Activated CD4-positive, alpha-beta memory T cell treated with anti-CD3 and anti-CD28 coated beads for 36 hours (primary cell): ENCODE measurements at regions of chr21 and their contacts with region 1.

Region 1: GRCh38 chr21:25561668-25562641 is 45.3 kb downstream of the MRPL39 start:
- DNase-seq: peak; percentile 89
- H3K4me3 Mint-ChIP-seq: peak overlapping the region; percentile 80
- H3K27ac Mint-ChIP-seq: peak overlapping the region; percentile 94
- H3K4me1 Mint-ChIP-seq: peaks cover 52% of the 10 kb centered on the region
- H3K27me3 Mint-ChIP-seq: no peaks in the 10 kb centered on the region

Region 2: DNA sequence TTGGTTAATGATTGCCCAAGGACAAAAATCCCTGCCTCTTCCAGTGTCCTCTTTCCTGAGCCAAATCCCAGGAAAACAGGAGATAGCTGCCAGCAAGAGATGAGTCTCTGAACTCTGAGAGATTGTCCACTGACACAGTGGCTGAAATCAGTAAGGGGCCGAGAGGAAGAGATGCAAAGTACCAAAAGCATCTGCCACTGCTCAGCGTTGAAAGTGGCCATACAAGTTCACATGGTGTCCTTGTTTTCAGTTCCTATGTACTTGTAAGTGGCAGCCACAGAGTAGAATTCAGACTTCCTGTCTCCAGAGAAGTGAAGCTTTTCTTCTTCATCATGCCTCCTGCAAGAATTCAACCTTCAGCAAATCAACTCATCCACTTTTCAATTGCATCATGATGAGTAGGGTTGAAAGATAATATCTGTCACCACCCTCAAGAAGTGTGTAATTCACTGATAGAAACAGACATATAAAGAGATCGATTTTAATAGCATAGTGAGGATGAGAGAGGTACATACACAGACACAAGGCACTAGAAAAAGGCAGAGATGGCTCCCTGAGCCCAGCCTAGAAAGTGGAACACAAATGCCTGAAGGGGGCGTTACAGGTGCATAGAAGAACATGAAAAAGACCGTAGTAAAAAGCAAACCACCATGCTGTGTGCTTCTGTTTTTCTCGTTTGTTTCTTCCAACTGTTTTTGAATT is 140.5 kb before region 1 on chr21:
- CTCF ChIA-PET with region 1: interaction called, 11 read pairs
- POLR2A ChIA-PET with region 1: interaction called, 67 read pairs
- intact Hi-C with region 1: loop called (anchors 1 kb)
- DNase-seq: peak; percentile 79
- H3K4me3 Mint-ChIP-seq: peak overlapping the region; percentile 67
- H3K27ac Mint-ChIP-seq: peak overlapping the region; percentile 89
- H3K4me1 Mint-ChIP-seq: peaks cover 62% of the 10 kb centered on the region
- H3K27me3 Mint-ChIP-seq: no peaks in the 10 kb centered on the region

Region 3: DNA sequence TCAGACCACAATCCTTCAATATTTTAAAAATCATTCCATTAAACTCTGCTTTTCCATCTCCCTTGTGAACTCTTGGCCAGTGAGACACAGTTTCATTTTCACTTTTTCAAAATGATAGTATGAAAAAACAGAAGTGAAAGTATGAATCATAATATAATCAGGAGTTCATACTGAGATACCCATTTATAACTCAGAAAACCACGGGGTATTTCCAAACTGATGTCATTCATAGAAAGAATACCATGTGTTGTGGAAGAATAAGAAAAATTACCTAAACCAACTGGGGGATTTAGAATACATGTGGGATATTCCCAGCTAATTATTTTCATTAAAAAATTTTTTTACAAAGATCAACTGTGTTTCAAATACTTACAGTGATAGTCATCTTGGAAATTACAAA is 104.5 kb before region 1 on chr21:
- CTCF ChIA-PET with region 1: no interaction called
- POLR2A ChIA-PET with region 1: interaction called, 40 read pairs
- intact Hi-C with region 1: loop called (anchors 1 kb)
- DNase-seq: no peak
- H3K4me3 Mint-ChIP-seq: peak overlapping the region; percentile 68
- H3K27ac Mint-ChIP-seq: peak overlapping the region; percentile 93
- H3K4me1 Mint-ChIP-seq: peaks cover 77% of the 10 kb centered on the region
- H3K27me3 Mint-ChIP-seq: no peaks in the 10 kb centered on the region

Region 4: DNA sequence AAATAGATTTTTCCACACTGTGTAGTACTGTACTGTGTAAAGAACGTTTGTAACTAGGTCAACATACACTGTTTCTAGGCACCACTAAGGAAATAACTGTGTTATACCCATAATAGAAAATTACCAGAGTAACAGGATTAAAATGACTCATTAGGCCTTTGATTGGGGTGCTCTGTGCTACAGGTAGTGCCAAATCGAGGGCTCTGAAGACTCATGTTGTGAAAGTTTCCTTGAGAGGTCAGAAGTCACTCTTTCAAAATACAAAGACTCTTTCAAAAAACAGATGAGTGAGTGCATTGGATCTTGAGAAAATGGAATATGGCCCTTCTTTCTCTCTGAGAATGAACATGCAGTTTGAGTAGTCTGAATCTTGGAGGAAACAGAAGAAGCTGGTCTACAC is 97.7 kb before region 1 on chr21:
- CTCF ChIA-PET with region 1: interaction called, 3 read pairs
- POLR2A ChIA-PET with region 1: interaction called, 29 read pairs
- intact Hi-C with region 1: no loop called
- DNase-seq: peak; percentile 38
- H3K4me3 Mint-ChIP-seq: peak overlapping the region; percentile 50
- H3K27ac Mint-ChIP-seq: peak overlapping the region; percentile 94
- H3K4me1 Mint-ChIP-seq: peaks cover 77% of the 10 kb centered on the region
- H3K27me3 Mint-ChIP-seq: no peaks in the 10 kb centered on the region

Region 5: DNA sequence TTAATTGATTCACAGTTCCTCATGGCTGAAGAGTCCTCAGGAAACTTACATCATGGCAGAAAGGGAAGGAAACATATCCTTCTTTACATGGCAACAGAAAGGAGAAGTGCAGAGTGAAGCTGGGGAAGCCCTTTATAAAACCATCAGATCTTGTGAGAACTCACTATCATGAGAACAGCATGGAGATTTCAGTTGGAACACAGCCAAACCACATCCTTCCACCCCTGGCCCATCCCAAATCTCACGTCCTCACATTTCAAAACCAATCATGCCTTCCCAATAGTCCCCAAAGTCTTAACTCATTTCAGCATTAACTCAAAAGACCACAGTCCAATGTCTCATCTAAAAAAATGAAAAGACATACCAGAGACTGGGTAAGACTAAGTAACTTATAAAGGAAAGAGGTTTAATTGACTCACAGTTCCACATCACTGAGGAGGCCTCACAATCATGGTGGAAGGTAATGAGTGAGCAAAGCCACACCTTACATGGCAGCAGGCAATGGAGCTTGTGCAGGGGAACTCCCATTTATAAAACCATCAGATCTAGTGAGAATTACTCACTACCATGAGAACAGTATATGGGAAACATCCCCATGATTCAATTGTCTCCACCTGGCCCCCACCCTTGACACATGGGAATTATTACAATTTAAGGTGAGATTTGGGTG is 59.8 kb before region 1 on chr21:
- CTCF ChIA-PET with region 1: no interaction called
- POLR2A ChIA-PET with region 1: interaction called, 117 read pairs
- intact Hi-C with region 1: loop called (anchors 1 kb)
- DNase-seq: peak; percentile 84
- H3K4me3 Mint-ChIP-seq: peak overlapping the region; percentile 39
- H3K27ac Mint-ChIP-seq: peak overlapping the region; percentile 87
- H3K4me1 Mint-ChIP-seq: peaks cover 57% of the 10 kb centered on the region
- H3K27me3 Mint-ChIP-seq: no peaks in the 10 kb centered on the region

Region 6: GRCh38 chr21:25507522-25507921 is 54.4 kb before region 1 on chr21:
- CTCF ChIA-PET with region 1: interaction called, 6 read pairs
- POLR2A ChIA-PET with region 1: interaction called, 182 read pairs
- intact Hi-C with region 1: loop called (anchors 1 kb)
- DNase-seq: no peak
- H3K4me3 Mint-ChIP-seq: peak overlapping the region; percentile 24
- H3K27ac Mint-ChIP-seq: peak overlapping the region; percentile 85
- H3K4me1 Mint-ChIP-seq: peaks cover 55% of the 10 kb centered on the region
- H3K27me3 Mint-ChIP-seq: no peaks in the 10 kb centered on the region

Region 7: GRCh38 chr21:25515484-25516405 is 46.2 kb before region 1 on chr21:
- CTCF ChIA-PET with region 1: interaction called, 5 read pairs
- POLR2A ChIA-PET with region 1: interaction called, 182 read pairs
- intact Hi-C with region 1: loop called (anchors 1 kb)
- DNase-seq: no peak
- H3K4me3 Mint-ChIP-seq: no peak overlapping the region
- H3K27ac Mint-ChIP-seq: no peak overlapping the region
- H3K4me1 Mint-ChIP-seq: peaks cover 45% of the 10 kb centered on the region
- H3K27me3 Mint-ChIP-seq: no peaks in the 10 kb centered on the region

Region 8: DNA sequence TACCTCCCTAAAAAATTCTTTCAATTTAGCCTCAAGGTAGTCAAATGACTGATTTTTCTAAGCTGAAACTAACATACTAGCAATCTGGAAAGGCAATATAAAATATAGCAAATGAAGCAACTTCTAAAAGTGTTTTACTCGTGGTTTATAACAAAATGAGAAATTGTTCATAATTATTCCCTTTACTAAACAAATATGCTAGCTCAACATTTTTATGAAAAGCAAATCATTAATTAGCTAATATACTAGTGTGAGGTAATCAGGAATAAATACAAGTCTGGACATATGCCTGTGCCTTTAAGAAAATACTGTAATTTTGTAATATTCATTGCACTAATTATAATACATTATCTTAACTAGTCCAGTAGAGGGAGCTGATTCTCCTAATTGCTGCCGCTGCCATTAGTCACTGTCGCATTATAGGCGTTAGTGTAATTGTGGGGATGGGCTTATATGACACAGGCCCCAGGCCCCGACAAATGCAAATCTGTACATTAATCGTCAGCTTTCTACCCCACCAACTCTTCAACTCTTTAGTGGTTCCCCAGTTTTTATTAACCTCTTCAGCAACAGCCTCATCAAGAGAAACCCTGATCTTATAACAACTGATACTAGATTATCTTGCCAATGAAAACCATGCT is 333.7 kb after region 1 on chr21:
- CTCF ChIA-PET with region 1: no interaction called
- POLR2A ChIA-PET with region 1: no interaction called
- intact Hi-C with region 1: no loop called
- DNase-seq: peak; percentile 17
- H3K4me3 Mint-ChIP-seq: no peak overlapping the region
- H3K27ac Mint-ChIP-seq: no peak overlapping the region
- H3K4me1 Mint-ChIP-seq: no peaks in the 10 kb centered on the region
- H3K27me3 Mint-ChIP-seq: no peaks in the 10 kb centered on the region